Transverse colon (tissue), 4 donors: ENCODE measurements at regions of chr1 and their contacts with region 1.

Region 1: GRCh38 chr1:150429805-150430204 is 57.4 kb upstream of the TARS2 start:
- DNase-seq: no peak
- H3K4me3 ChIP-seq: no peak overlapping the region
- H3K27ac ChIP-seq: no peak overlapping the region
- H3K4me1 ChIP-seq: no peaks in the 10 kb centered on the region
- H3K27me3 ChIP-seq: no peaks in the 10 kb centered on the region
- CTCF ChIP-seq: peak in 3 of 5 experiments; percentile 9 to 15 (median 11)
- EP300 ChIP-seq: no peak
- POLR2A ChIP-seq: no peak

Region 2: GRCh38 chr1:150415800-150416199 is 14.0 kb before region 1 on chr1:
- in situ Hi-C with region 1: no loop called
- intact Hi-C with region 1: loop called (anchors 1 kb)
- DNase-seq: no peak
- H3K4me3 ChIP-seq: no peak overlapping the region
- H3K27ac ChIP-seq: no peak overlapping the region
- H3K4me1 ChIP-seq: peaks cover 0 to 3% (median 0%) of the 10 kb centered on the region in 4 donors
- H3K27me3 ChIP-seq: no peaks in the 10 kb centered on the region
- CTCF ChIP-seq: no peak
- EP300 ChIP-seq: no peak
- POLR2A ChIP-seq: no peak